ENCODE measurements at regions of chr6 and their contacts with region 1.

Region 1: GRCh38 chr6:53544470-53545308 is at the start of gene GCLC:
- DNase-seq: peak; percentile 94 to 95
- H3K4me3 ChIP-seq: peak within 1 kb of the TSS; percentile 50 to 82
- H3K27ac ChIP-seq: peak within 1 kb of the TSS; percentile 87 to 94
- H3K4me1 ChIP-seq: no peaks in the 10 kb centered on the region
- H3K27me3 ChIP-seq: no peaks in the 10 kb centered on the region
- CTCF ChIP-seq: peak; percentile 62 to 82 (median 69)
- POLR2A ChIP-seq: peak; percentile 87 to 95
- total RNA-seq, gene GCLC: 20.0 to 41.0 (median 32.7) TPM

Region 2: GRCh38 chr6:53090576-53090975 is 454.1 kb before region 1 on chr6:
- intact Hi-C with region 1: no loop called
- DNase-seq: no peak
- H3K4me3 ChIP-seq: no peak overlapping the region
- H3K27ac ChIP-seq: no peak overlapping the region
- H3K4me1 ChIP-seq: no peaks in the 10 kb centered on the region
- H3K27me3 ChIP-seq: no peaks in the 10 kb centered on the region
- CTCF ChIP-seq: no peak
- POLR2A ChIP-seq: no peak

Region 3: DNA sequence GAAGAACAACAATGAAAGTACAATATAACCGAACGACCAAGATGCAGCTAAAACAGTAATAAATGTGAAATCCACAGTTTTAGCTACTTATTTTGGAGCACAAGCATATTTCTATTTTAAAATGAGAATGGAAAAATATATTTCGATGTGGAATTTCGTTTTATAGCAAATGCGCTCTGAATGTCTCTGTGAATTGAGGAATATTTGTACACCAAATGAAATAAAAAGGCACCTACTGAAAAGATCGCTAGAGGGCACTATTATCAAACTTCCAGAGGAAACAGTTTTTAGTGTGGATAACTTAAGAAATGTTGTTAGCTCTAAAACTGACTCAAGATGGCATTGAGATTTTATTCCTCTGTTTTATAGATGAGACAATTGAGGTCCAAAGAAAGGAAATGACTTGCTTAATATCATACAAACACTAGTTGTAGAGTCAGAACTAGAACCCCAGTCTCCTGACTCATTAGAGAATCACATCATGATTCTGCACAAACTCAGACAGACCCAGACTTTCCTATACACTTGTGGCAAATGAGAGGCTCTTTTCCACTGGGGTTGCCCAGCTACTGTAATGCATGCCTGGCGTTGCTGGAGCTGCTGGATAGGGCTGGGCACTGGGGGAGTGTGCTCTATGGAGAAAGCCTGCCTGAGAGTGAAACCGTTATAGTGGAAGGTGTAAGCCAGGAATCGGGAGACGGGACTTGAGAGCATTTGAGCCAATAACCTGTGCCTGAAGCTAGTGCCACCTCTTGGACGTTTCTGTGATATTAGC is 51.6 kb before region 1 on chr6:
- intact Hi-C with region 1: no loop called
- DNase-seq: no peak
- H3K4me3 ChIP-seq: no peak overlapping the region
- H3K27ac ChIP-seq: no peak overlapping the region
- H3K4me1 ChIP-seq: peaks cover 0 to 3% of the 10 kb centered on the region in 2 donors
- H3K27me3 ChIP-seq: no peaks in the 10 kb centered on the region
- CTCF ChIP-seq: peak; percentile 55 to 80 (median 71)
- POLR2A ChIP-seq: no peak

Region 4: DNA sequence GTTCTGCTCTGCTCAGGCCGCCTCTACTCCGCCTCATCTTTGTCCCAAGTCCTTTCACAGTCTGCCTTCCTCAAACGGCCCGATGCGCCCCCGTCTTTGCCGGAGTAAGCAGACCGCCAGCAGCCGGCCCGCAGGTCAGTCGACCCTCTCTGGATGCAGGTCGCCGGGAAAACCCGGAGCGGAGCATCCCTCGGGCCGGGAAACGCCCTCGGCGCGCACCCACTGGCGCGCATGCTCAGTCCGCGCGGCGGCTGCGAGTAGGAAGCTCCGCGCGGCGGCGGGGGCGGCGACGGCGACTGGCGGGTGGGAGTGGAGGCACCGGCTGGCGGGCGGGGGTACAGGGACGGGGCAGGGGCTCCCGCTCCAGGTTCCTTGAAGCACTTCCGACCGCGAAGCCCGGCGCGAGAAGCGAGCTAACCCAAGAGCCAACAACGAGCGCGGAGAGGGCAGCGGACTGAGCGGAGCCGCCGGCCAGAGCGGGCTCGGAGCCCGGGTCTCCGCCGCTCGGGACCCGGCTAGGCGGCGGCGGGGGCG is 250.1 kb after region 1 on chr6 and contains the start of gene LRRC1:
- intact Hi-C with region 1: loop called (anchors 10 kb)
- DNase-seq: peak; percentile 86 to 93
- H3K4me3 ChIP-seq: peak within 1 kb of the TSS; percentile 66 to 68
- H3K27ac ChIP-seq: peak within 1 kb of the TSS; percentile 69 to 75
- H3K4me1 ChIP-seq: no peaks in the 10 kb centered on the region
- H3K27me3 ChIP-seq: no peaks in the 10 kb centered on the region
- CTCF ChIP-seq: no peak
- POLR2A ChIP-seq: peak; percentile 44 to 77
- total RNA-seq, gene LRRC1: 4.4 to 39.7 (median 17.7) TPM

Region 5: GRCh38 chr6:53829698-53830221 is 285.1 kb after region 1 on chr6:
- intact Hi-C with region 1: no loop called
- DNase-seq: no peak
- H3K4me3 ChIP-seq: no peak overlapping the region
- H3K27ac ChIP-seq: no peak overlapping the region
- H3K4me1 ChIP-seq: no peaks in the 10 kb centered on the region
- H3K27me3 ChIP-seq: no peaks in the 10 kb centered on the region
- CTCF ChIP-seq: no peak
- POLR2A ChIP-seq: no peak